Posterior vena cava (tissue), 2 donors: ENCODE measurements at regions of chr6 and their contacts with region 1.

Region 1: DNA sequence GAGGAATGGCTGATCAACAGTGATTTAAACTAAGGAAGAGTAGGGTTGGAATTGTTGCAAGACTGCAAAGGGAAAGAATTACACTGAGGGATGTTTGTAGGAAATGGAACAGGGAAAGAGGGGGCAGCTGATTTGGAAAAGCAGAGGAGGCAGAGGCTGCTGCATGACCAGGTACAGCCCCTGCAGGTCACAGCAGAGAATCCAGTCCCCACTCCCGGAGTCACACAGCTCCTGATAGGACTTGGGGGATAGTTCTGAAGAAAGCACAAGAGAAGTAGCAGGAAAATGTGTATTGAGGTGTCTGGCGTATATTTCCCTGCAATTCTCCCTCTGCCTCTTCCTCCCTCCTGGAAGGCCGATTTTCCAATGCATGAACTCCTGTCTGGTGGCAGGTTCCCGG is 92.5 kb upstream of the PDE10A start:
- DNase-seq: no peak

Region 2: GRCh38 chr6:165729307-165729936 is 26.2 kb before region 1 on chr6:
- intact Hi-C with region 1: loop called in 1 of 2 experiments (anchors 1 kb)
- DNase-seq: no peak

Region 3: DNA sequence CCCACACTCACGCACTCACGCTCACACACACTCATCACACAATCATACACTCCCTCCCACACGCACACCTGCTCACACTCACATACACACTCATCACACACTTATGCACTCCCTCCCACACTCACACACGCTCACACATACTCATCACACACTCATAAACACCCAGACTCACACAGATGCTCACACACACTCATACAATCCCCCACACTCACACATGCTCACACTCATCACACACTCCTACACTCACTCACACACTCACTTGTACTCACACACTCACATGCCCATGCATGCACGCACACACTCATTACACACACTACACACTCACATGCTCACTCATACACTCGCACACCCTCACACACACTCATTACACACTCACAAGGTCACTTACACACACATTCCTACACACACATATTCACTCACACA is 38.6 kb after region 1 on chr6:
- intact Hi-C with region 1: no loop called
- DNase-seq: no peak

Region 4: GRCh38 chr6:165850434-165851019 is 94.9 kb after region 1 on chr6:
- intact Hi-C with region 1: no loop called
- DNase-seq: peak; percentile 93

Region 5: DNA sequence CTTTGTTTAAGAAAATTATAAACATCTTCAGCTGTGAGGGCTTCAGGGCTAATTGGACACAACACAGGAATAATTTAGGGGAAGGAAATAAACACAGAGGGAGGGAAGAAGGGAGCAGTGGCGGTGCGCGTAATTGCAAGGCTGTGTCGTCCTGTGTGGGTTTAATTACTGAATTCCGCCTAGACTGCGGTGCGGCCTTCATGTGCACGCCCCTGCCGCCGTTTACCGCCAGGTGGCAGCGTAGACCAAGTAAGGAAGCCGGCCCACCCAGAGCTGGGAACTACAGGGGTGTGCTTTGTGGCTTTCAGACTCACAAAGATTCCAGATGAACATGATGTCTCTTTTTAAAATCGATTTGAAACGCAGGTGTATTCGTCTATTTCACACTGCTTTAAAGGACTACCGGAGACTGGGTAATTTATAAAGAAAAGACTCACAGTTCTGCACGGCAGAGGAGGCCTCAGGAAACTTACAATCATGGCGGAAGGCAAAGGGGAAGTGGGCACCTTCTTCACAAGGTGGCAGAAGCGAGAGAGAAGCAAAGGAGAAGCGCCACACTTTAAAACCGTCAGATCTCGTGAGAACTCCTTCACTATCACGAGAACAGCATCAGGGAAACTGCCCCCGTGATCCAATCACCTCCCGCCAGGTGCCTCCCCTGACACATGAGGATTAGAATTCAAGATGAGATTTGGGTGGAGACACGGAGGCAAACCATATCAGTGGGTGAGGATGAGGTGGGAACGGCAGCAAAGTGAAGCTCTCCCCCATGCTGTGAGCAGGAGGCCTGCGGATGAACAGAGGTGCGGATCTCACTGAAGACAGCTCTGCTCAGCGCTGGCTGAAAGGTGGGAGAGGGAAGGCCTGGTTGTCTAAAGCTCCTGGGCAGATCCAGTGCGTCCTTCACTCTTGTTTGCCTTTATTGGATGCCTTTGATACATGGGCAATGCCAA is 129.5 kb after region 1 on chr6:
- intact Hi-C with region 1: no loop called
- DNase-seq: peak; percentile 90

Region 6: DNA sequence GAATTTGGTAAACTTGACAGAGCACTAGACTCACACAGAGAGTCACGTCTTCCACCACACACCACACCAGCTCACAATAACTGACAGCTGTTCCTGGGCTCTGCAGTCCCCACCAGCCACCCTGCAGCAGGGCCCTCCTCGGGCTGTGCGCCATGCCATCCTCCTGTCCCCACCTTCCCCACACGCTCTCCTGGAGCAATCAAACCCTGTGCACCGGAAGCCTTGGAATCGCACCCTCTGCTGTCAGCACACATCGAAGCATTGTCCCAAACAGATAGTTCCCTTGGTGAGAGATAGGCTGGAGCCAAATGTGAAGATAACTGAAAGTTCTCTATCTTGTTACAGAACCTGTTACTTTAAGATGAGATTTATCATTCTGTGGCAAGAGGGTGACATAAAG is 221.1 kb after region 1 on chr6:
- intact Hi-C with region 1: no loop called
- DNase-seq: no peak